ENCODE measurements at regions of chr17 and their contacts with region 1.

Region 1: DNA sequence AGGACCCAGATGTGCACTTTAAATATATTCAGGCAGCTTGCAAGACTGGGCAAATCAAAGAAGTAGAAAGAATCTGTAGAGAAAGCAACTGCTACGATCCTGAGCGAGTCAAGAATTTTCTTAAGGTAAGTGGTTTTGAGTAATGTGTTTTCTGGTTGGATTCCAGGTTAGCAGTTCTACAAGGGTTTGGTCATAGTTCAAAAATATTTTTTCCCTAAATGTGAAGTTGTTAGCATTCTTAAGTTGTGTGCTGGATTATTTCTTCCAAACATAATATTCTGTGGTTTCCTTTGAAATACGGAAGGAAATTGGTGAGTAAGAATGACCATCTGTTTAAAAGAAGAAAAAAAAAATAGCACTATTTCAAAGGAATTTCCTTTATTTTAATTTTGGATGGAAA is 38.4 kb downstream of the PTRH2 start:
- DNase-seq: no peak
- ATAC-seq: peak in 3 of 4 donors; percentile 11 to 49 (median 39)
- H3K4me3 ChIP-seq: no peak overlapping the region
- H3K27ac ChIP-seq: peak overlapping the region in 2 of 12 donors; percentile 48 to 72
- H3K4me1 ChIP-seq: peaks cover 0 to 51% (median 5%) of the 10 kb centered on the region in 12 donors
- H3K27me3 ChIP-seq: no peaks in the 10 kb centered on the region
- CTCF ChIP-seq: no peak
- POLR2A ChIP-seq: no peak

Region 2: GRCh38 chr17:59607817-59608403 is 60.9 kb before region 1 on chr17:
- intact Hi-C with region 1: no loop called
- DNase-seq: no peak
- ATAC-seq: no peak
- H3K4me3 ChIP-seq: no peak overlapping the region
- H3K27ac ChIP-seq: no peak overlapping the region
- H3K4me1 ChIP-seq: no peaks in the 10 kb centered on the region
- H3K27me3 ChIP-seq: no peaks in the 10 kb centered on the region
- CTCF ChIP-seq: peak in 3 of 12 donors; percentile 13 to 29 (median 16)
- POLR2A ChIP-seq: no peak

Region 3: GRCh38 chr17:59702304-59702703 is 33.5 kb after region 1 on chr17:
- intact Hi-C with region 1: loop called in 1 of 10 experiments (anchors 5 kb)
- DNase-seq: no peak
- ATAC-seq: no peak
- H3K4me3 ChIP-seq: no peak overlapping the region
- H3K27ac ChIP-seq: no peak overlapping the region
- H3K4me1 ChIP-seq: peaks cover 0 to 57% (median 14%) of the 10 kb centered on the region in 12 donors
- H3K27me3 ChIP-seq: no peaks in the 10 kb centered on the region
- CTCF ChIP-seq: no peak
- POLR2A ChIP-seq: no peak